ENCODE measurements at regions of chr22 and their contacts with region 1.

Region 1: DNA sequence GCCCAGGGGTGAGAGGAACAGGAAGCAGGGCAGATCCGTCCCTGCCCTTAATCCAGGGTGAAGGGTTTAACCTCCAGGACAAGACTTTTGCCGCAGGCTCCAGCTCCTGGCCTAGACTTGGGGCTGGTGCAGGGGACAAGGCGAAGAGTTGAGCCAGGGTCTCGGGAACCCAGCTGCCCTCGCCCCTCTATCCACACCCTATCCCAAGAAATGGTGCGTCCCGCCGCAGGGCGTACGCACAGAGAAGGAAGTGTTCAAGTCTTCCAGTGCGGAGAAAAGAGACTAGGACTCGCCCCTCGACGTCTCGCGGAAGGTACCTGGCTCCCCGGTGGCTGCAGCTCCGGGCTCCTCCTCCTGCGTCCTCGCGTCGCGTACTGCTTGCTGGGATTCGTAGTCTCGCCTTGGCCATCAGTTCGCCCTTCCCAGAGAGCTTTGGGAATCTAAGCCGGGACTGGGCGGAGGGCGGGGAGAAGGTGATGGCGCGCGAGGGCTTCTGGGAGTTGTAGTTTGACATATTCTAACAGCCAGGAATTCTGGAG is at the start of gene ZMAT5:
- DNase-seq: peak; percentile 90
- H3K4me3 Mint-ChIP-seq: peak within 1 kb of the TSS; percentile 98
- H3K27ac Mint-ChIP-seq: peak within 1 kb of the TSS; percentile 88
- H3K4me1 Mint-ChIP-seq: peaks cover 40% of the 10 kb centered on the region
- H3K27me3 Mint-ChIP-seq: no peaks in the 10 kb centered on the region
- total RNA-seq, gene ZMAT5: 28.4 and 28.5 TPM in 2 replicates

Region 2: DNA sequence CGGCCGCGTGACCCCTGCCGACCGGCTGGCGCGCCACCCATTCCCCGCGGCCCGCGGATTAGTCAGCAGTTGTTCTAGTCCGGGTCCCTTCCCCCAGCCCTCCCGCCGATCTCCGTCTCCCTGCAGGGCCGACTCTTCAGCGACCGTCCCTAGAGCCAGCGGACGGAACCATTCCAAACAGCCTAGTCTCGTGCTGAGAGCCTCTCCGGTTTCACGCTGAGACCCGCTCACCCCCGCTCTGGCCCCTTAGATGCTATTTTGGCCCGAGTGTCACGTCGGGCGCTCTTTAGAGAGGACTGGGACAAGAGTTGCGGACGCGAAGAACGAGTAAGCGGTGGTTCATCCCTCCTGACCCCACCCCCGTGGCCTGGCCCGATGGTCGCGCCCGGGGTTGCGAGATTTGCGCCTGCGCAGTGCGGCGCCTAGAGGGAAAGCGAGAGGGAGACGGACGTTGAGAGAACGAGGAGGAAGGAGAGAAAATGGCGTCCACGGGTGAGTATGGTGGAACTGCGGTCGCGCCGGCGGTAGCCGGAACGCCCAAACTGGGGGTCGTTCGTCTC is 498.8 kb before region 1 on chr22 and contains the starts of genes EWSR1 and RHBDD3:
- intact Hi-C with region 1: loop called (anchors 2 kb)
- DNase-seq: peak; percentile 97
- H3K4me3 Mint-ChIP-seq: peak within 1 kb of the TSS; percentile 96
- H3K27ac Mint-ChIP-seq: peak within 1 kb of the TSS; percentile 99
- H3K4me1 Mint-ChIP-seq: peaks cover 49% of the 10 kb centered on the region
- H3K27me3 Mint-ChIP-seq: no peaks in the 10 kb centered on the region
- total RNA-seq, gene EWSR1: 454 and 463 TPM in 2 replicates
- total RNA-seq, gene RHBDD3: 53.3 and 59.4 TPM in 2 replicates

Region 3: GRCh38 chr22:29531419-29531818 is 235.3 kb before region 1 on chr22:
- intact Hi-C with region 1: no loop called
- DNase-seq: no peak
- H3K4me3 Mint-ChIP-seq: no peak overlapping the region
- H3K27ac Mint-ChIP-seq: no peak overlapping the region
- H3K4me1 Mint-ChIP-seq: no peaks in the 10 kb centered on the region
- H3K27me3 Mint-ChIP-seq: no peaks in the 10 kb centered on the region

Region 4: DNA sequence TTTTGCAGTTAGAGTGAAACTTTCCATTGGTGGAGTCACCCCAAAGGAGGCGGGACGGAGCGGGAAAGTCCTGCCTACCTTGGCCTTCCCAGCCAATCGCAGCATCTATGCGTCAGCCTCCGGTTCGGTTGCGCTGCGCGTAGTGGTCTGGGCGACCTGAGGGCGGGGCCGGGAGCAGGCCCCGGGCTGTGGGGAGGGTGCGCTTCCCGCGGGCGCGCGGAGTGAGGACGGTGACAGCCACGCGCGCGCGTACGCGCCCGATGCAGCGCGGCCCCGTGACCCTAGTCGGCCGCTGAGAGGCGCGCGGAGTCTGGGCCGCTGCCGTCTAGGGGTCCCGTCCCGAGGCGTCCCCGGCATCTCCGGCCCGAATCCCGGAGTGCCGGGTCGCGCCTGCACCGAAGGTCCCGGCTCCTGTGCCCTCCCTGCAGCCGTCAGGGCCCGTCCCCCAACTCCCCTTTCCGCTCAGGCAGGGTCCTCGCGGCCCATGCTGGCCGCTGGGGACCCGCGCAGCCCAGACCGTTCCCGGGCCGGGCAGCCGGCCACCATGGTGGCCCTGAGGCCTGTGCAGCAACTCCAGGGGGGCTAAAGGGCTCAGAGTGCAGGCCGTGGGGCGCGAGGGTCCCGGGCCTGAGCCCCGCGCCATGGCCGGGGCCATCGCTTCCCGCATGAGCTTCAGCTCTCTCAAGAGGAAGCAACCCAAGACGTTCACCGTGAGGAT is 163.2 kb before region 1 on chr22 and contains the start of gene NF2:
- intact Hi-C with region 1: loop called (anchors 1 kb)
- DNase-seq: peak; percentile 99
- H3K4me3 Mint-ChIP-seq: peak within 1 kb of the TSS; percentile 96
- H3K27ac Mint-ChIP-seq: peak within 1 kb of the TSS; percentile 98
- H3K4me1 Mint-ChIP-seq: peaks cover 23% of the 10 kb centered on the region
- H3K27me3 Mint-ChIP-seq: no peaks in the 10 kb centered on the region
- total RNA-seq, gene NF2: 65.7 and 66.1 TPM in 2 replicates

Region 5: DNA sequence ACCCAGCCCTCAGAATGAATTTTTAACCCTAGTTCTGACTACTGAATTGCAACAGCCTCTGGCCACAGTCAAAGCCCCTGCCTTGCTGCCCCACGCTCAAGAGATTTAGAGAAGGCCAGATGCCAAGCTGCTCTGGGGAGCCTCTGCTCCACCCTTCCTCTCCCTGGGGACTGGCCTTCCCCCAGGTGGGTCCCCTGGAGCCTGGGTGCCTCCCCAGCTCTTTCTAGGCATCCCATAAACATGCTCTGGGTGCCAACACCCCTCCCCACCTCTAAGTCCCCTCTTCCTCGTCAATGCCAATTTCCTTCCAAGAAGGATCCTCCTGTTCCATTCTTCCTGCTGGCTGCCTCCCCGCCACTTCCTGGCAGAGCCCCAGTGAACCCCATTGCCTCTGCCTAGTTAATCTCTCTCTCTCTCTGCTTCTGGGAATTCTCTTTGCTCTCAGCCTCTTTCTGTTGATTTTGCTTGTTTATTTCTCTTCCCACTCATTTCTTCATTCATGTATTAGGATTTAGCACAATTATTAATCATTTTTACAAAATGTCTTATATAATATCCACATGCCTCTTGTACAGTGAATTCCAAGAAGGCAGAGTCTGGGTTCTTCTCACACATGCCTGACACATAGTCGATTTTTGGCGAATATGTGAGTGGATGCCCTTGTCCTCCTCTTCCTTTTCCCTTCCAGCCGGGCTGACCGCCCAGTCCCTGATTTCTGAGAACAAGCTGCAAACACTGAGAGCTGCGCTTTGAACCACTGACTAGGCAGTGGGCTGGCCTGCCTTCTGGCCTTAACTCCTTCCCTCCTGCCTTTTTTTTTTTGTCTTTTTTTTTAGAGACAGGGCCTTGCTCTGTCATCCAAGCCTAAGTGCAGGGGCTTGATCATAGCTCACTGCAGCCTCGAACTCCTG is 18.0 kb after region 1 on chr22:
- intact Hi-C with region 1: no loop called
- DNase-seq: no peak
- H3K4me3 Mint-ChIP-seq: no peak overlapping the region
- H3K27ac Mint-ChIP-seq: no peak overlapping the region
- H3K4me1 Mint-ChIP-seq: no peaks in the 10 kb centered on the region
- H3K27me3 Mint-ChIP-seq: no peaks in the 10 kb centered on the region

Region 6: DNA sequence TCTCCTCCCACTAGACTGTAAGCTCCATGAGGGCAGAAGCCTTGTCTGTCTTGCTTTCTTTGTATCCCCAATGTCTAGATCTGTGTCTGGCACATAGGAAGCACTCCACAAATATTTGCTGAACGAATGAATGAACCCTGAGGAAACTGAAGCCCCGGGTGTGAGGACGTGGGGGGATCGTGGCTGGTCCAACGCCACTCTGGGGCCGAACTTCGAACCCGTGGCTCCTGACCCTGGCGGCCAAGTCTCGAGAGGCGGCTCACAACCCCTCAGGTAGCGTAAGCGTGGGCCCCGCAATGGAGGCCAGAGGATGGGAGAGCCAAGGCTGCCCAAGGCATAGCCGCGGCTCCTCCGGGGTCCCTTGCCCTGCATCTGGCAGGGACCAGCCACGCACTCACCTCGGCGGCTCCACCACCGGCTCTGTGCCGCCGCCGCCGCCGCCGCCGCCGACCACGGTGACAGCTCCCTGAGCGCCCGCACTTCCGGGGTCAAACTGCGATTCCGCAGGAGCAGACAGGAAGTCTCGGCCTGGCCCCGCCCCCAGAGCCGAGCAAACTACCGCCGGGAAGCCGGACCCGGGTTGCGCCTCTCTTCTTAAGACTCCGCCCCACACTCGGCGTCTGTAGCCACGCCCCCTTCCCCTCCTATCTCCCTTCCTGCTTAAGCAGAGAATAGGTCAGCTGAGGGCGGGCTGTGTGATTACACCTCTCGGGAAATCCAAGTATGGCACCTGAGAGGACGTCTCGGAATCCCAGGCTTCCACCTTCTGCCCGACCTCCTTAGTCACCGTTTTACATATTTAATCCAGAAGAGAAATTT is 71.3 kb after region 1 on chr22 and contains the start of gene ASCC2:
- intact Hi-C with region 1: loop called (anchors 1 kb)
- DNase-seq: peak; percentile 99
- H3K4me3 Mint-ChIP-seq: peak within 1 kb of the TSS; percentile 89
- H3K27ac Mint-ChIP-seq: peak within 1 kb of the TSS; percentile 86
- H3K4me1 Mint-ChIP-seq: peaks cover 33% of the 10 kb centered on the region
- H3K27me3 Mint-ChIP-seq: peaks cover 5% of the 10 kb centered on the region
- total RNA-seq, gene ASCC2: 84.5 and 90.9 TPM in 2 replicates

Region 7: GRCh38 chr22:30005213-30005857 is 238.6 kb after region 1 on chr22:
- intact Hi-C with region 1: loop called (anchors 1 kb)
- DNase-seq: peak; percentile 41
- H3K4me3 Mint-ChIP-seq: no peak overlapping the region
- H3K27ac Mint-ChIP-seq: no peak overlapping the region
- H3K4me1 Mint-ChIP-seq: peaks cover 17% of the 10 kb centered on the region
- H3K27me3 Mint-ChIP-seq: no peaks in the 10 kb centered on the region

Region 8: DNA sequence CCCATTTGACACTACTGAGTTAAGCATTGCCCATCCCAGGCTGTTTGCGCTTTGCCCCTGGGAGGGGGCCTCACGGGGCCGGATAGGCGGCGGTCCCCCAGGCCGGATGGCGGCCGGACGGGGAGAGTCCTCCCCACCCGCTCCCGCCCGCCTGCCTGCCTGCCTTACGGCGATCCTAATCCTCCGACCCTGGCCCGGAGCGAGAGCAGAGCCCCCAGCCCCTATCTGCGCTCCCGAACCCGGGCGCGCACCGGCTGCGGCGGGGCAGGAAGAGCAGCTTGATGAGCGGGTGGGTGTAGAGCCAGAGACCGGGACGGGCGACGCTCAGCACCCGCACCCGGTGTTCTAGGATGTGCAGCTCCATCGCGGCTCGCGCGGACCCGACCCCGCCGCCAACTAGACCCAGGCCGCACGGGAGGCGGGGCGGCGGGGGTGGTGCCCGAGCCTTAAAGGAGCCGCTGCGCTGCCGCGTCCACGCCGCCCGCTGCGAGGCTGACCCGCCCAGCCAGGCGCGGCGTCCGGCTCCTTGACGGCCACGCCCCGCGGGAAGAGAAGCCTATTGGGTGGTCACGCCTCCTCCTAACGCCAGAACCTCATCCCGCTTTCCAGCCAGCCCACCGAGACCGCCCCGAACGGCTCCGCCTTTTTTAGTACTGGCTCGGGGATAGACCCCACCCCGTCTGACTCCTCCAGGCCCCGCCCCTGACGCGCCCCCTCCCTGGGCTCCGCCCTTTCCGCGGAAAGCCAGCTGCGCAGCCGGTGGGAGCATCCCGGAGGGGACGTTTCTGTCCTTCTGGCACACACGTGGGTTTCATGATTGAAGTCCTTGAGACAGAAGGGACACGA is 522.7 kb after region 1 on chr22 and contains the start of gene CASTOR1:
- intact Hi-C with region 1: loop called (anchors 1 kb)
- DNase-seq: peak; percentile 90
- H3K4me3 Mint-ChIP-seq: peak within 1 kb of the TSS; percentile 87
- H3K27ac Mint-ChIP-seq: peak within 1 kb of the TSS; percentile 81
- H3K4me1 Mint-ChIP-seq: peaks cover 56% of the 10 kb centered on the region
- H3K27me3 Mint-ChIP-seq: no peaks in the 10 kb centered on the region
- total RNA-seq, gene CASTOR1: 5.6 and 8.8 TPM in 2 replicates

Measured in activated T-helper 1 cell treated with anti-CD3 and anti-CD28 coated beads, Interleukin-12 subunit alpha, Interleukin-12 subunit beta, Interleukin-2, Interleukin-4 antibody, amounts not matched to agents 30 ng/mL and 10 ng/mL and 1 ng/mL, durations not matched to agents 14 hours and 24 hours and 36 hours (primary cell).